ENCODE measurements at regions of chr1 and their contacts with region 1.

Region 1: DNA sequence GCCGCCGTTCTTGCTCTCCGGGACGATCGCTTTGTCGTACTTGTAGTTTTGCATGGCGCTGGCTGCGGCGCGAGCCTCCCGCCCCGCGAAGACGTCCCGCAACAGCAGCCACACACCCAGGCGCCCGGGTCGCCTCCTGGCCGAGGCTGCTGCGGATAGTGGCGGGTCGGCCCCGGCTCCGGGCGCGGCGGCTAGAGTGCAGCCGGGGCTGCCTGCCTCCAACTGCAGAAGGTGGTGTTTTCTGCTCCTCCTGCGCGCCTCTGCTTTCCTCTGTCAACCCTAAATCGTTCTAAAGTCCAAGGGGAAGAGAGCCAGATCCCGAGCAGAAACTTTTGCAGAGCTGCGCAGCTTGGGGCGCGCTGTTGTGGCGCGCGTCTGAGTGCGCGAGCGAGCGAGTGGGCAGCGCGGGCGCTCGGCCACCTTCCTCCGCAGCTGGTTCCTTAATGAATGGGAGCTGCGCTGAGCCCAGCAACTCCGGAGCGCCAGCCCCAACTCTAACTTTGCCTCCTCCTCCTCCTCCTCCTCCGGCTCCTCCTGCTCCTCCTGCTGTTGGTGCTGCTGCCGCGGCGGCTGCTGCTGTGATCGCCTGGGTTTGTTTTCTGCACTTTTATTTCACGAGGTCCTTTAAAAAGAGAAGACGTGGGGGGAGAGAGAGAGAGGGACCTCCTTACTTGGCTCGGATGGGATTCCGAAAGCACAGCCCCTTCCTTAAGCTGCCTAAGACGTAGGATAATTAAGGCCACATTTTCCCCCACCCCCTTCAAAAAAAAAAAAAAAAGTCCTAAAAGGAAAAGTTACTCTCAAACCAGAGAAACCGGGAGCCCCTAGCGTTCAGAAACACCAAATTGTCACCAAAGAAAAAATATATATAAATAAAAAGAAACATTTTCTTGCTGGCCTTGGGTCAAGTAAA is at the start of gene PLPP3:
- DNase-seq: peak; percentile 81 to 83
- ATAC-seq: peak; percentile 75 to 80
- H3K4me3 ChIP-seq: peak within 1 kb of the TSS; percentile 73 to 99 (median 88)
- H3K27ac ChIP-seq: peak within 1 kb of the TSS; percentile 86 to 95 (median 88)
- H3K4me1 ChIP-seq: peaks cover 29 to 35% of the 10 kb centered on the region in 2 donors
- H3K27me3 ChIP-seq: no peaks in the 10 kb centered on the region
- CTCF ChIP-seq: peak in 3 of 5 experiments; percentile 26 to 44 (median 38)
- POLR2A ChIP-seq: peak; percentile 75 to 91
- total RNA-seq, gene PLPP3: 53.2 to 71.5 (median 55.5) TPM

Region 2: DNA sequence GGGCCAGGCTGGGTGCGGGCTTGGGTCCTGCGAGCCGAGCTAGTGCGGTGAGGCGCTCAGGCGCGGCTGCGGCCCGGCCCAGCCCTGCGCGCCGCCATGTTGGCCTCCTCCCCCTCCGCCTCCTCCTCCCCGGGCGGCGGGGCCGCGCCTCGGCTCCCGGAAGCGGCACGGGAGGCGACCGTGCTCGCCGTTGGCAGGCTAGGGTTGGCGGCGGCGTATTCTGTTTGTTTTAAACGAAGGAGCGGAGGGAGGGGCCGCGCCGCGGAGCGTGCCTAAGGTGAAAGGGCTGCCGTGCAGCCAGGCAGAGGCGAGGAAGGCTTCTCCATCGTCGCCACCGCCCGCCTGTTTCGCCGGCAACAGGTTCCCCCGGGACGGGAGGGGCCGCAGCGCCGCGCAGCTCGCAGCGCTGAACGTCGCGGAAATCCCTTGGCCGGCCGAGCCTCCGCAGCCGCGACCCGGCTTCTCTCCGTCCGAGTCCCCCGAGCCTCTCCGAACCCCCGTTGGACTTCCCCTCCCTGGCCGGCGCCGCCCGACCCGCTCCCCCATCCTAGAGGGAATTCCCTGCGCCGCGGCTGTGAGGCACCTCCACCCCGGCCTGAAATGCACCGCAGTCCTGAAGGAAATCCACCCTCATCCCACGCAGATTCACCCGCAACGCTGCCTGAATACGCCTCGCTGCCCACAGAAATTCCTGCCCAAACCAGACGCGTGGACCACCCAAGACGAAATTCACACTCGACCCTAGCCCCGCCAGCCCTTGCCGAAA is 1363.8 kb before region 1 on chr1 and contains the start of gene USP24:
- in situ Hi-C with region 1: no loop called
- intact Hi-C with region 1: loop called (anchors 5 kb)
- DNase-seq: peak; percentile 64 to 69
- ATAC-seq: peak; percentile 77 to 80
- H3K4me3 ChIP-seq: peak within 1 kb of the TSS; percentile 73 to 94 (median 90)
- H3K27ac ChIP-seq: peak within 1 kb of the TSS; percentile 97 to 100 (median 99)
- H3K4me1 ChIP-seq: peaks cover 37 to 56% of the 10 kb centered on the region in 2 donors
- H3K27me3 ChIP-seq: no peaks in the 10 kb centered on the region
- CTCF ChIP-seq: no peak
- POLR2A ChIP-seq: peak; percentile 86 to 92
- total RNA-seq, gene USP24: 77.3 to 102 (median 90.8) TPM

Region 3: GRCh38 chr1:55696181-55696754 is 883.0 kb before region 1 on chr1:
- in situ Hi-C with region 1: loop called in 1 of 4 experiments (anchors 25 kb)
- intact Hi-C with region 1: no loop called
- DNase-seq: peak; percentile 28 to 57
- ATAC-seq: peak; percentile 26 to 28
- H3K4me3 ChIP-seq: no peak overlapping the region
- H3K27ac ChIP-seq: peak overlapping the region; percentile 55 to 64 (median 60)
- H3K4me1 ChIP-seq: peaks cover 21 to 35% of the 10 kb centered on the region in 2 donors
- H3K27me3 ChIP-seq: no peaks in the 10 kb centered on the region
- CTCF ChIP-seq: no peak
- POLR2A ChIP-seq: no peak

Region 4: DNA sequence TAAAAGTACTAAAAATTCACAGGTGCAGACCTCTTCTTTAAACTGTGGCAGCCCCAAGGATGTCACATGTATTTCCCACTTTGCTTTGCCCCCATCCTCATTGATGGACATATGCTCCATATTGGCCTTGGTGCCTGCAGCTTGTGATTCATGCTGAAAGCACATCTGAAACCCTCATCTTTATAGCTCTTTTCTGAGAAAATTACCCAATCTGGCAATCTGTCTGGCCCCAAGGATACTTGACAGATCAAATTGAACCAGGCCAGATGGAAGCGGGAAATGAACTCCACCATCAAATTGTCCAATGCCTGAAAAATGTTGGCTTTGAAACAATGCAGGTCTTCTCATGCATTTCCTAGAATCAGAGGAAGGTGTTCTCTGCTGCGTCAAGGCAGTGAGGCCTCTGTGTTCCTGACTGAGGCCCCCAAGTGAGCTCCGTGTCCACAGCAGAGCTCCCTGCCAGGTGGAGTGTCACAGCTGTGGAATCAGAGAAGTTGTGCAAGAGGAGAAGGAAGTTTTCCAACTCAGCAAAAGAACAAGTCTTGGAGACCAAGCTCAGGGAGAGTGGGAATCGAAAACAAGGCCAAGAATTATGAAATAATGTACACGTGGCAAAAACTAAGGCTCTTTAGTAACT is 323.6 kb before region 1 on chr1:
- in situ Hi-C with region 1: no loop called
- intact Hi-C with region 1: loop called (anchors 5 kb)
- DNase-seq: peak; percentile 88 to 92
- ATAC-seq: peak; percentile 91
- H3K4me3 ChIP-seq: no peak overlapping the region
- H3K27ac ChIP-seq: peak overlapping the region; percentile 69 to 85 (median 80)
- H3K4me1 ChIP-seq: peaks cover 42% of the 10 kb centered on the region in 2 donors
- H3K27me3 ChIP-seq: no peaks in the 10 kb centered on the region
- CTCF ChIP-seq: no peak
- POLR2A ChIP-seq: peak in 1 of 2 donors; percentile 10

Region 5: GRCh38 chr1:56508523-56508983 is 70.7 kb before region 1 on chr1:
- in situ Hi-C with region 1: no loop called
- intact Hi-C with region 1: loop called (anchors 5 kb)
- DNase-seq: peak; percentile 58 to 83
- ATAC-seq: peak; percentile 62 to 91
- H3K4me3 ChIP-seq: no peak overlapping the region
- H3K27ac ChIP-seq: peak overlapping the region; percentile 49 to 77 (median 60)
- H3K4me1 ChIP-seq: peaks cover 54 to 60% of the 10 kb centered on the region in 2 donors
- H3K27me3 ChIP-seq: no peaks in the 10 kb centered on the region
- CTCF ChIP-seq: no peak
- POLR2A ChIP-seq: no peak

Region 6: GRCh38 chr1:56617141-56617540 is 37.9 kb after region 1 on chr1:
- in situ Hi-C with region 1: no loop called
- intact Hi-C with region 1: no loop called
- DNase-seq: no peak
- ATAC-seq: no peak
- H3K4me3 ChIP-seq: no peak overlapping the region
- H3K27ac ChIP-seq: no peak overlapping the region
- H3K4me1 ChIP-seq: no peaks in the 10 kb centered on the region
- H3K27me3 ChIP-seq: no peaks in the 10 kb centered on the region
- CTCF ChIP-seq: no peak
- POLR2A ChIP-seq: no peak

Region 7: DNA sequence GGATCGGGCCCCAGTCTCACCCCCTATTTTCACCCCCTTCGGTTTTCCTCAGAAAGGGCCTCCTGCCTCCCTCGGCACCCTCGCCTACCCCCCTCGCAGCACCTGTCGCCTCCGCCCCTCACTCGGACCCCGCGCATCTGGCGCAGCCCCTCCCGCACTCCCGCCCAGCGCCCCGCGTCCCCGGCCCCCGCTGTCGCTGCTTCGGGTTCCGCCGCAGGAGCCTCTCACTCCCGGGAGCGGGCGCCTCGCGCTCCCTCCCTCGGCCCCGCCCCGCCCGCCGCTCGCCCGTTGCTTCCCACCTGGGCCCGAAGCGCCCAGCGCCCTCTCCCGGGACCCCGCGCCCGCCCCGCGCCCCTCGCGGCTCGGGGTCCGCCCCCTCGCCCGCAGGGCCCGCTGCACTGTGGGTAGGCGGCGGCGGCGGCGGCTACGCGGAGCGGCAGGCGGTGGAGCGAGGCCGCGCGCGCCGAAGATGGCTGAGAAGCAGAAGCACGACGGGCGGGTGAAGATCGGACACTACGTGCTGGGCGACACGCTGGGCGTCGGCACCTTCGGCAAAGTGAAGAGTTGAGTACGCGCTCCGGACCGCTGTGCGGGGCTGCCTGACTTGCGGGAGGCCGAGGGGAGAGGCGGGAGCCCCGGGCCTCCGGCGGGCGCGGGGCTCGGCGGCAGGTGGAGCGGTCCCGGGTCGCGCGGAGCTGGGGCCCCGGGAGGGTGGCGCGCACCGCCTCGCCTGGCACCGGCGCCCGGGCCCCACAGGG is 65.9 kb after region 1 on chr1 and contains the start of gene PRKAA2:
- in situ Hi-C with region 1: no loop called
- intact Hi-C with region 1: loop called (anchors 5 kb)
- DNase-seq: peak; percentile 18 to 53
- ATAC-seq: peak; percentile 62 to 65
- H3K4me3 ChIP-seq: peak within 1 kb of the TSS; percentile 66 to 82 (median 68)
- H3K27ac ChIP-seq: peak within 1 kb of the TSS; percentile 87 to 94 (median 90)
- H3K4me1 ChIP-seq: peaks cover 20 to 25% of the 10 kb centered on the region in 2 donors
- H3K27me3 ChIP-seq: no peaks in the 10 kb centered on the region
- CTCF ChIP-seq: no peak
- POLR2A ChIP-seq: peak; percentile 62 to 66
- total RNA-seq, gene PRKAA2: 24.6 to 78.6 (median 70.9) TPM

Region 8: DNA sequence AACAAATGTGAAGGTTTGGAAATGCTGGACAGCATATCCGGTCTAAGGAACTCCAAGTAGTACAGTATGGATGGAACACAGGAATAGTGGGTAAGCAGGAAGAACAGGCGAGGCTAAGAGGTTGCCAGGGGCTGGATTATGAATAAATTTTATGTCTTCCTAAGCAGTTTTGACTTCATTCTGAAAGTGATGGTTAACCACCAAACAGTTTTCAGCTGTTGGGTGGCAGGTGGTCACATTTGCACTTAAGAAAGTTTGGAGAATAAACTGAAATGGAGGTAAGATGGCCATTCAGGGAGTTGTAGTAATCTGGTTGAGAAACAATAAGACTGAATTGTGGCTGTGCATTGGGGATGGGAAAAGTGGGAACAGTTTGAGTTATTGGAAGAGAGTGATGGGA is 149.7 kb after region 1 on chr1:
- in situ Hi-C with region 1: no loop called
- intact Hi-C with region 1: no loop called
- DNase-seq: no peak
- ATAC-seq: no peak
- H3K4me3 ChIP-seq: no peak overlapping the region
- H3K27ac ChIP-seq: no peak overlapping the region
- H3K4me1 ChIP-seq: no peaks in the 10 kb centered on the region
- H3K27me3 ChIP-seq: peaks cover 0 to 10% (median 5%) of the 10 kb centered on the region in 3 donors
- CTCF ChIP-seq: no peak
- POLR2A ChIP-seq: no peak

Measured in gastrocnemius medialis (tissue), 4 donors.